CD8-positive, alpha-beta T cell (primary cell): ENCODE measurements at regions of chr13 and their contacts with region 1.

Region 1: DNA sequence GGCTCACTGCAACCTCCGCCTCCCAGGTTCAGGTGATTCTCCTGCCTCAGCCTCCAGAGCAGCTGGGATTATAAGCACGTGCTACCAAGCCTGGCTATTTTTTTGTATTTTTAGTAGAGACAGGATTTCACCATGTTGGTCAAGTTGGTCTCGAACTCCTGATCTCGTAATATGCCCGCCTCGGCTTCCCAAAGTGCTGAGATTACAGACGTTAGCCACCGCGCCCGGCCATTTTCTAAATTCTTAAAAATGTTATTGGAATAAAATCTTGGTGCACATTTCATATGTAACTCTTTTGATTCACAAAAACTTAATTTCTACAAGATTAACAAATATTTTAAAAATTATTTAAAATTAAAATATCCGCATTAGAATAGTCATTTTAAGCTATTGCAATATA is 1480.3 kb upstream of the SPRY2 start:
- DNase-seq: no peak
- ATAC-seq: no peak
- H3K4me3 ChIP-seq: no peak overlapping the region
- H3K4me3 Mint-ChIP-seq: no peak overlapping the region
- H3K27ac ChIP-seq: no peak overlapping the region
- H3K27ac Mint-ChIP-seq: no peak overlapping the region
- H3K4me1 ChIP-seq: no peaks in the 10 kb centered on the region
- H3K4me1 Mint-ChIP-seq: no peaks in the 10 kb centered on the region
- H3K27me3 ChIP-seq: no peaks in the 10 kb centered on the region
- H3K27me3 Mint-ChIP-seq: no peaks in the 10 kb centered on the region
- CTCF ChIP-seq: no peak

Region 2: DNA sequence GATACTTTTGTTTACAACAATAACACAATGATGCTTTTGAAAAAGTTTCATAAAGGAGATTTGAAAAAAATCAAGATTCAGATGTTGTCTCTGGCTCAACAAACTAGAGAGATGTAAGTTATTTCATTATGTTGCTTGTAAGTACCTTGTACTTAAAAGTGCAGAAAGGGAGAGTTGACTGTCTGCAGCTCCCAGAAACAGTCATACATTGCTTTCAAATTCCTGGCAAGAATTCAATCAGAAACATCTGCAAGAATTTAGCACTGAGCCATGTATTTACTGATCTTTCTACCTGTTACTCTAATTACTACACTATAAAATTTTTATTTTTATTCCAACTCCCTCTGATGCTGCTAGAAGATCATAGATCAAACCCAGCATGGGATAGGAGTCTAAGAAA is 219.0 kb before region 1 on chr13:
- CTCF ChIA-PET with region 1: no interaction called
- POLR2A ChIA-PET with region 1: no interaction called
- intact Hi-C with region 1: no loop called
- DNase-seq: no peak
- ATAC-seq: no peak
- H3K4me3 ChIP-seq: no peak overlapping the region
- H3K4me3 Mint-ChIP-seq: no peak overlapping the region
- H3K27ac ChIP-seq: no peak overlapping the region
- H3K27ac Mint-ChIP-seq: no peak overlapping the region
- H3K4me1 ChIP-seq: no peaks in the 10 kb centered on the region
- H3K4me1 Mint-ChIP-seq: no peaks in the 10 kb centered on the region
- H3K27me3 ChIP-seq: no peaks in the 10 kb centered on the region
- H3K27me3 Mint-ChIP-seq: no peaks in the 10 kb centered on the region
- CTCF ChIP-seq: no peak

Region 3: GRCh38 chr13:81791641-81792040 is 29.6 kb before region 1 on chr13:
- CTCF ChIA-PET with region 1: no interaction called
- POLR2A ChIA-PET with region 1: no interaction called
- intact Hi-C with region 1: loop called in 1 of 2 experiments (anchors 1 kb)
- DNase-seq: no peak
- ATAC-seq: no peak
- H3K4me3 ChIP-seq: no peak overlapping the region
- H3K4me3 Mint-ChIP-seq: no peak overlapping the region
- H3K27ac ChIP-seq: no peak overlapping the region
- H3K27ac Mint-ChIP-seq: no peak overlapping the region
- H3K4me1 ChIP-seq: no peaks in the 10 kb centered on the region
- H3K4me1 Mint-ChIP-seq: no peaks in the 10 kb centered on the region
- H3K27me3 ChIP-seq: no peaks in the 10 kb centered on the region
- H3K27me3 Mint-ChIP-seq: no peaks in the 10 kb centered on the region
- CTCF ChIP-seq: no peak